IMR-90 (cell line): ENCODE measurements at regions of chr1 and their contacts with region 1.

Region 1: DNA sequence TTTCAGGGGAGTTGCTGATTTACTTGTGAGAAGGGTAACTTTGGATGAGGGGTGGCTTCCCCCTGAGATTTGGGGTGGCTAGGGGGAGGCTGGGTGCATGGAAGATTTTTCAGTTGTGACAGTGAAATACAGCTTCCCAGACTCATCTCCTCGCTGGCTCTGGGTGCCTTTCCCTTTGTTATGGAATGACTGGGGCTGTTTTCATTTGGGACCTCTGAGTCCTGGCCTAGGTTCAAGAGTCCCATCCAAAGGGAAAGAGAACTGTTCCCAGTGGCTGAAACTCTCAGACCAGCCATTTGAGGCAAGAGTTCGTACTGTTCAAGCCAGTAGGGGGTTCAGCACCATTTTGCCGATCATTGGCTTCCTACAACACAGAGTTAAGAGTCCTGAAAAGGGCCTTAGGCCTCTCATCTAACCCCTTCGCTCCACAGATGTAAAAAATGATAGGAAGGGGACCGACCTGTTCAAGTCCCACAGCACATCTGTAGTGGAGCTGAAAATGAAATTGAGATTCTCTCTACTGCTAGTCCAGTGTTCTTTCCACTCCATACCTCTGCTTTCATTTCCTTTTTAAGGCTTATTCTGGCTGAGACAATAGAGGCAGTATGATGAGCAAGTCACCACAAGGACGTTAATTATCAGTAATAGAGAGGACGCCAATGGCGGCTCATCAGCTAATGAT is 958 bp downstream of the DDR2 start:
- DNase-seq: peak; percentile 59
- ATAC-seq: peak; percentile 13
- H3K4me3 ChIP-seq: peak overlapping the region; percentile 76
- H3K27ac ChIP-seq: peak overlapping the region; percentile 88
- H3K4me1 ChIP-seq: peaks cover 17% of the 10 kb centered on the region
- H3K27me3 ChIP-seq: no peaks in the 10 kb centered on the region
- CTCF ChIP-seq: peak; percentile 28; the same call in 1 of the 2 replicates
- POLR2A ChIP-seq: 0 out of 2 replicates have a peak, but pooled peaks have one; percentile 29
- RAD21 ChIP-seq: peak; percentile 25

Region 2: GRCh38 chr1:161994175-161994668 is 639.0 kb before region 1 on chr1:
- CTCF ChIA-PET with region 1: no interaction called
- POLR2A ChIA-PET with region 1: no interaction called
- dilution Hi-C with region 1: no loop called
- in situ Hi-C with region 1: no loop called
- intact Hi-C with region 1: no loop called
- DNase-seq: peak; percentile 49
- ATAC-seq: peak; percentile 84
- H3K4me3 ChIP-seq: no peak overlapping the region
- H3K27ac ChIP-seq: no peak overlapping the region
- H3K4me1 ChIP-seq: no peaks in the 10 kb centered on the region
- H3K27me3 ChIP-seq: peaks cover 3% of the 10 kb centered on the region
- CTCF ChIP-seq: no peak
- POLR2A ChIP-seq: no peak
- RAD21 ChIP-seq: no peak

Region 3: DNA sequence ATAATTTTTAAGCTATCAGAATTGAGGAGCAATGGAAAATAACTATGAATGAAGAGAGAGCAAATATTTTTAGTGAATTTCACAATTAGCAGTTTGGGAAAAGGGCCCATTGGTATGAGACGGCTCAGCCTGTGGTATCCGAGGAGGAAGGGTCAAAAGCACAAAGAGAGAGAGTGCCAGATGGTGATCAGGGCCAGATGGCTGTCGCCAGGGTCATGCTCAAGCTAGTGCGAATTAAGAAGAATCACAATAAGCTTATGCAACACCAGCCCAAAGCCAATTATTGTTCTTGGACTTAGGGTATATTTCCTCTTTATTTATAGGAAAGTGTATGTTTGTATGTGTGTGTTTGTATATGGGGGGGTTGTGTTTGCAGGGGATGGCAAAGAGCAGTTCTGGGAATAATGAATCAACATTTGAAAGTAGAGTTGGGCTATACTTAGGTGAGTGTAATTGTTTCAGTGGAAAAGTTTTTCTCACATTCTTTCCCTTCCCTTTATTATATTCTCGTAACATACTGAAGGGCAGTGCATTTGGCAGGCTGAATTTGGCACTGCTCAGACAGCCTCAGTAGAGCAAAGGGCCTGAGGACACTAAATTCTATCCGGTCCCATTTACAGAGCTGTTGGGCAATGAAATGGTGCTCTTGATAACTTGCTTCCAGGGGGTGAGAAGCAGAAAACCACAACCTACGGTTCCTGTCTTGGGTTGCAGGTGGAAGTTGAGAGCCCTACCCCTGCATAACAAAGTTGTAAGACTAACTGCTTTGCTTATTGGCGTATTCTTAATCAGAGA is 20.4 kb before region 1 on chr1:
- CTCF ChIA-PET with region 1: interaction called, 3 read pairs
- POLR2A ChIA-PET with region 1: no interaction called
- dilution Hi-C with region 1: no loop called
- in situ Hi-C with region 1: no loop called
- intact Hi-C with region 1: loop called (anchors 1 kb)
- DNase-seq: peak; percentile 34
- ATAC-seq: peak; percentile 36
- H3K4me3 ChIP-seq: no peak overlapping the region
- H3K27ac ChIP-seq: no peak overlapping the region
- H3K4me1 ChIP-seq: peaks cover 3% of the 10 kb centered on the region; the same call in 1 of the 2 replicates
- H3K27me3 ChIP-seq: no peaks in the 10 kb centered on the region
- CTCF ChIP-seq: no peak
- POLR2A ChIP-seq: no peak; the same call in none of the 2 replicates
- RAD21 ChIP-seq: no peak

Region 4: GRCh38 chr1:162649583-162649982 is 16.4 kb after region 1 on chr1:
- CTCF ChIA-PET with region 1: no interaction called
- POLR2A ChIA-PET with region 1: interaction called, 4 read pairs
- dilution Hi-C with region 1: no loop called
- in situ Hi-C with region 1: no loop called
- intact Hi-C with region 1: loop called (anchors 2 kb)
- DNase-seq: no peak
- ATAC-seq: no peak
- H3K4me3 ChIP-seq: no peak overlapping the region
- H3K27ac ChIP-seq: no peak overlapping the region
- H3K4me1 ChIP-seq: peaks cover 7% of the 10 kb centered on the region
- H3K27me3 ChIP-seq: no peaks in the 10 kb centered on the region
- CTCF ChIP-seq: no peak
- POLR2A ChIP-seq: no peak
- RAD21 ChIP-seq: no peak

Region 5: DNA sequence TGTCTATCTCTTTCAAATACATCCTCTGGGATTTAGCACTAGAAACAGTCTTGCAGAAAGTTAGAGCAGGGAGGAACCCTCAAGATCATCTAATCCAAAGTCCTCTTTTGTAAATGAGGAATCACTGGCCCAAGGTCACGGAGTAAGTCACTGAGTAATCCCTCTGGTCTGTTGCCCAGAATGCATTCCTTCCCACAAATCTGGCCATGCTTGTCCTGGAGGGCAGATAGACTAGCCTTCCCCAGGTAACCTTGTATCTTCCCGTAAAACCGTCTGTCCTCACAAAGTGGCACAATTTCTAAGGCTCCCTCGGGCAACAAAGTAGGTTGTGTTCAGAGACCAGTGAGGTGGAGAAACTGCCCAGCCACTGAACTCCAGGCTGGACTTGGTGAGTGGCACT is 45.2 kb after region 1 on chr1:
- CTCF ChIA-PET with region 1: interaction called, 4 read pairs
- POLR2A ChIA-PET with region 1: no interaction called
- dilution Hi-C with region 1: no loop called
- in situ Hi-C with region 1: no loop called
- intact Hi-C with region 1: loop called (anchors 5 kb)
- DNase-seq: peak; percentile 89
- ATAC-seq: peak; percentile 59
- H3K4me3 ChIP-seq: no peak overlapping the region
- H3K27ac ChIP-seq: peak overlapping the region; percentile 58; the same call in 1 of the 2 replicates
- H3K4me1 ChIP-seq: peaks cover 20% of the 10 kb centered on the region
- H3K27me3 ChIP-seq: no peaks in the 10 kb centered on the region
- CTCF ChIP-seq: no peak
- POLR2A ChIP-seq: no peak
- RAD21 ChIP-seq: no peak

Region 6: GRCh38 chr1:162690672-162691434 is 57.6 kb after region 1 on chr1:
- CTCF ChIA-PET with region 1: no interaction called
- POLR2A ChIA-PET with region 1: interaction called, 3 read pairs
- dilution Hi-C with region 1: no loop called
- in situ Hi-C with region 1: no loop called
- intact Hi-C with region 1: loop called (anchors 2 kb)
- DNase-seq: peak; percentile 93
- ATAC-seq: peak; percentile 80
- H3K4me3 ChIP-seq: no peak overlapping the region
- H3K27ac ChIP-seq: peak overlapping the region; percentile 95
- H3K4me1 ChIP-seq: peaks cover 26% of the 10 kb centered on the region
- H3K27me3 ChIP-seq: no peaks in the 10 kb centered on the region
- CTCF ChIP-seq: no peak
- POLR2A ChIP-seq: no peak
- RAD21 ChIP-seq: no peak

Region 7: GRCh38 chr1:162710345-162710744 is 77.1 kb after region 1 on chr1:
- CTCF ChIA-PET with region 1: no interaction called
- POLR2A ChIA-PET with region 1: no interaction called
- dilution Hi-C with region 1: no loop called
- in situ Hi-C with region 1: no loop called
- intact Hi-C with region 1: no loop called
- DNase-seq: peak; percentile 59
- ATAC-seq: peak; percentile 64
- H3K4me3 ChIP-seq: no peak overlapping the region
- H3K27ac ChIP-seq: peak overlapping the region; percentile 100
- H3K4me1 ChIP-seq: peaks cover 28% of the 10 kb centered on the region
- H3K27me3 ChIP-seq: no peaks in the 10 kb centered on the region
- CTCF ChIP-seq: no peak
- POLR2A ChIP-seq: no peak
- RAD21 ChIP-seq: no peak

Region 8: DNA sequence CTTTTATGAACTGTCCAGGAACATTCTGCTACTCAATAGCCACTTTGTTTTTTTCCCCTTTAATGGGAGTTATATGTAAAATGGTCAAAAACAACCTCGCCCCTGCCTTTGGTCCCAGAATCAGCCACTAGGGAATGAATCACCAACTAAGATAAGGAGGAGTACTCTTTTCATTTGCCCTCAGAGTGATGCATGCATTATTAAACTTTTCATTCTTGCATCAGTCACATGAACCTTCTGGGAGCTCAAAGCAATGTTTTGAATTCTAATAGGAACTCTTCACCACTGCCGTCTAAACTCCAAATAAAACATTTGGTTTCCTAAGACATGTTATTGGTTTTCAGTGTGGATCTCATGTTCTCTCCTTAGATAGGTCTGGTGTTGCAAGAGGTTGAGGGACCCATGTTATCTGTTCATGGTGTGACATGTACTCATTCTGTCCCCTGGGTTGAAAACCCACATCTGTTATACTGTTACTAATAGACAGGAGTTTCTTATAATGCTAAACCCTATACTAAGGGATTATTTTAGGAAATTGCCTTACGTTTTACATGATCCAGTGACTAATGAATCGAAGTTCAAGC is 139.4 kb after region 1 on chr1:
- CTCF ChIA-PET with region 1: no interaction called
- POLR2A ChIA-PET with region 1: no interaction called
- dilution Hi-C with region 1: no loop called
- in situ Hi-C with region 1: no loop called
- intact Hi-C with region 1: loop called (anchors 10 kb)
- DNase-seq: peak; percentile 66
- ATAC-seq: peak; percentile 80
- H3K4me3 ChIP-seq: no peak overlapping the region
- H3K27ac ChIP-seq: no peak overlapping the region
- H3K4me1 ChIP-seq: no peaks in the 10 kb centered on the region
- H3K27me3 ChIP-seq: no peaks in the 10 kb centered on the region
- CTCF ChIP-seq: no peak
- POLR2A ChIP-seq: no peak
- RAD21 ChIP-seq: peak; percentile 8; the same call in 1 of the 2 replicates

Region 9: GRCh38 chr1:163013826-163014600 is 380.8 kb after region 1 on chr1:
- CTCF ChIA-PET with region 1: no interaction called
- POLR2A ChIA-PET with region 1: no interaction called
- dilution Hi-C with region 1: no loop called
- in situ Hi-C with region 1: no loop called
- intact Hi-C with region 1: no loop called
- DNase-seq: no peak
- ATAC-seq: no peak
- H3K4me3 ChIP-seq: no peak overlapping the region
- H3K27ac ChIP-seq: no peak overlapping the region
- H3K4me1 ChIP-seq: no peaks in the 10 kb centered on the region
- H3K27me3 ChIP-seq: no peaks in the 10 kb centered on the region
- CTCF ChIP-seq: no peak
- POLR2A ChIP-seq: no peak
- RAD21 ChIP-seq: no peak